PC-3 (cell line): ENCODE measurements at regions of chr6 and their contacts with region 1.

Region 1: DNA sequence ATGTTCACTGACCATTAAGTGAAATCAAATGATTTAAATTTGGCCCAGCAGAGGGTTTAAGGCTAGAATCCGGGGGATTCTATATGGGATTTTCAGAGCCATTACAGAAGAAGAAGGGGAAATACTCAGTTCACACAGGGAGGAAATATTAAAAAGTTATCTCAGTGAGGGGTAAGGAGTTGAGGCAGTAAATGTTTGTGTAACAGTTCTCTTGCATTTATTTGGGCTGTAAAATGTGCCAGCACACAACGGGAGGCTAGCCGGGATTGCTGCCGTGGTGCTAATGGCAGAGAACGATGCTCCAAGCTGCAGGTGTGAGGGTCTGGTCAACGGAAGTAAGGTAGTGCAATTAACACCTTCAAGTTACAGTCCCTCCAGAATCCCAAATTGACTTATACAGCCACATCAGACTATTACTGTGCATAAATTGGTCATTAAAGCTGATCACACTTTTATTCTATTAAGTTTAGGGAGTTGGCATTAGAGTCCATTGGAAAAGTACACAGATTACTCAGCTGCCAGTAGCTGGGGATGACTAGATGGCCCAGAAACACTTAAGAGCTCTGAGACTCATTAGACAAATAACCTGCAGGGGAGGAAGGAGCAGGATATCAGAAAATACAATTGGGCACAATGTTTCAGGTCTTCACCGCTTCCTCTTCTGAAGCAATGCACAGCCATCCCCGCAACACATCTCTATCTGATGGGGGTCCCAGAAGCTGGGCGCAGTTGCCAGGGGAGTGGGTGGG is 31.3 kb downstream of the PPP1R3G start:
- DNase-seq: peak; percentile 81
- ATAC-seq: peak; percentile 96
- H3K4me3 ChIP-seq: no peak overlapping the region; the same call in 1 of the 2 replicates
- H3K27ac ChIP-seq: peak overlapping the region; percentile 73
- H3K4me1 ChIP-seq: peaks cover 16% of the 10 kb centered on the region
- H3K27me3 ChIP-seq: no peaks in the 10 kb centered on the region
- CTCF ChIP-seq: no peak

Region 2: DNA sequence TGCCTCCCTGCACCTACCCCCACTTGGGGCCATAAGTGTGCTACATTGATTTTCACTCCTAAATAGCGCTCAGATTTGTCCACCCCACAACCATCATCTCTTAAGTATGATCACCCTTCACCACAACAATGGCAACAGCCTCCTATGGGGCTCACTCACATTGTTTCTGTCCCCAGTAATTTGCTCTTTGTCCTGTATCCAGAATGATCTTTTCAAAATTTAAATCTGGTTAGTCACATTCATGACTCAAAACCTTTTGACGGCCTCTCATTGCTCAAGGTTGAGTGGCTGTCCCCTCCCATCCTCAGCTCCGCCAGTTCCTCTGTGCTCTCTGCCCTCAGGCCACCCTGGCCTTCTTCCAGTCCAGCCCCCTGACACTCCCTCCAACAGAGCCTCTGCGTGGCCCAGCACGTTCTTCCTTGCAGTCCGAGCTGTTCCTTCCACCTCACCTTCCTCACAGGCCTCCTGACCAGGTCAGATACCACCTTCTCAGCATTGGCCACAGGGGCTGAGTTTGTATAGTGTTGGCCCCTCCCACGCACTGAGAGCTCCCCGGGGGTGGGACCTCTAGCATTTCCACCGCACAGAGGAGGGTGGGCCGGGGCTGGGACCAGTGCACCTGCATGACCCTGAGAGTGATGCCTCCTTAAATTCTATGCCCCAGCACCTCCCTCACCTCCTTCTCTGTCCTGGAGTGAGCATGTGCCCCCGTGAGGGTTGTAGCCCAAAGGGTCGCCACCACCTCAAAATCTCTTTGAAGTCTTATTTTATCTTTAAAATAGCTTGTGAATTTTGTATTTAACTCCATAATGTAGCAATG is 33.7 kb before region 1 on chr6:
- CTCF ChIA-PET with region 1: no interaction called
- POLR2A ChIA-PET with region 1: no interaction called
- intact Hi-C with region 1: loop called (anchors 1 kb)
- DNase-seq: peak; percentile 98
- ATAC-seq: peak; percentile 64
- H3K4me3 ChIP-seq: 0 out of 2 replicates have a peak overlapping the region, but pooled peaks have one; percentile 22
- H3K27ac ChIP-seq: peak overlapping the region; percentile 64
- H3K4me1 ChIP-seq: peaks cover 35% of the 10 kb centered on the region
- H3K27me3 ChIP-seq: no peaks in the 10 kb centered on the region
- CTCF ChIP-seq: no peak